ENCODE measurements at regions of chr6 and their contacts with region 1.

Region 1: GRCh38 chr6:83417880-83418663 is 12.8 kb downstream of the ME1 start:
- DNase-seq: no peak

Region 2: DNA sequence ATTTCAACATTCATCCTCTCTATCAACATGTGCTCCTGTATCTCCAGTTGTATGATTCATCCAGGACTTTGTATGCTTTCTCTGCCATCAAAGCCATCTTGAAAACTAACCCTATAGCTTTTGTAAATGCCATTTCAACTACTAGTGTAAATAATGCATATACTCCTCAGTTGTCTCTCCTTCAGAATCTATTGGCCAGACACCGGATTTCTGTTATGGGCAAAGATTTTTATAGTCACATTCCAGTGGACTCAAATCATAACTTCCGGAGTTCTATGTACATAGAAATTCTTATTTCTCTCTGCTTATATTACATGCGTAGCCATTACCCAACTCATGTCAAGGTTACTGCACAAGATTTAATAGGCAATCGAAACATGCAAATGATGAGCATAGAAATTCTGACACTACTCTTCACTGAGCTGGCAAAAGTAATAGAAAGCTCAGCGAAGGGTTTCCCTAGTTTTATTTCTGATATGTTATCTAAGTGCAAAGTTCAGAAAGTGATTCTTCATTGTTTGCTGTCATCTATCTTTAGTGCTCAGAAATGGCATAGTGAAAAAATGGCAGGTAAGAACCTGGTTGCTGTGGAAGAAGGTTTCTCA is 279.9 kb before region 1 on chr6:
- intact Hi-C with region 1: no loop called
- DNase-seq: no peak

Region 3: DNA sequence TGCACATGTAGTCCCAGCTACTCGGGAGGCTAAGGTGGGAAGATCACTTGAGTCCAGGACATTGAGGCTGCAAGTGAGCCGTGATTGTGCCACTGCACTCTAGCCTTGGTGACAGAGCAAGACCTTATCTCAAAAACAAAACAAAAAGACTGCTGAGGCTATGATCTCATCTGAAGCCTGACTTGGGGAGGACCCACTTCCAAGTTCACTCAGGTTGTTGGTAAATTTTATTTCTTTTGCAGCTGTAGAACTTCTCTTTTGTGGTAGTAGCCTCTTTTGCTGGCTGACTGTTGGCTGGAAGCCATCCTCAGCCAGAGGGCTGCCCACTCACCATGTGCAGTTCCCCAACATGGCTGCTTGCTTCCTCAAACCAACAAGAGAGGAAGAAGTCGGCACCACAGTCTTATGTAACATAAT is 49.6 kb after region 1 on chr6:
- intact Hi-C with region 1: no loop called
- DNase-seq: peak in 6 of 10 donors; percentile 8 to 81 (median 14)

Region 4: GRCh38 chr6:83514866-83515466 is 96.9 kb after region 1 on chr6:
- intact Hi-C with region 1: loop called (anchors 2 kb)
- DNase-seq: peak in 2 of 10 donors; percentile 15 to 31